ENCODE measurements at regions of chr7 and their contacts with region 1.

Region 1: GRCh38 chr7:107150375-107151073 is 18.3 kb upstream of the HBP1 start:
- DNase-seq: peak; percentile 50
- H3K4me3 Mint-ChIP-seq: no peak overlapping the region
- H3K27ac Mint-ChIP-seq: no peak overlapping the region
- H3K4me1 Mint-ChIP-seq: peaks cover 9% of the 10 kb centered on the region
- H3K27me3 Mint-ChIP-seq: no peaks in the 10 kb centered on the region
- CTCF ChIP-seq: peak; percentile 22

Region 2: GRCh38 chr7:106793015-106793975 is 357.2 kb before region 1 on chr7:
- CTCF ChIA-PET with region 1: interaction called, 4 read pairs
- intact Hi-C with region 1: loop called (anchors 1 kb)
- DNase-seq: peak; percentile 53
- H3K4me3 Mint-ChIP-seq: no peak overlapping the region
- H3K27ac Mint-ChIP-seq: no peak overlapping the region
- H3K4me1 Mint-ChIP-seq: no peaks in the 10 kb centered on the region
- H3K27me3 Mint-ChIP-seq: no peaks in the 10 kb centered on the region
- CTCF ChIP-seq: peak; percentile 62

Region 3: GRCh38 chr7:106947244-106947728 is 203.2 kb before region 1 on chr7:
- CTCF ChIA-PET with region 1: interaction called, 6 read pairs
- intact Hi-C with region 1: loop called (anchors 1 kb)
- DNase-seq: peak; percentile 40
- H3K4me3 Mint-ChIP-seq: no peak overlapping the region
- H3K27ac Mint-ChIP-seq: no peak overlapping the region
- H3K4me1 Mint-ChIP-seq: peaks cover 8% of the 10 kb centered on the region
- H3K27me3 Mint-ChIP-seq: peaks cover 58% of the 10 kb centered on the region
- CTCF ChIP-seq: no peak

Region 4: GRCh38 chr7:107044347-107045194 is 106.0 kb before region 1 on chr7 and contains the start of gene PRKAR2B:
- CTCF ChIA-PET with region 1: no interaction called
- intact Hi-C with region 1: loop called (anchors 10 kb)
- DNase-seq: peak; percentile 64
- H3K4me3 Mint-ChIP-seq: peak within 1 kb of the TSS; percentile 66
- H3K27ac Mint-ChIP-seq: no peak within 1 kb of the TSS
- H3K4me1 Mint-ChIP-seq: peaks cover 18% of the 10 kb centered on the region
- H3K27me3 Mint-ChIP-seq: peaks cover 18% of the 10 kb centered on the region
- CTCF ChIP-seq: no peak
- total RNA-seq, gene PRKAR2B: 1.5 and 3.1 TPM in 2 replicates